Motor neuron (in vitro differentiated cells): ENCODE measurements at regions of chrX and their contacts with region 1.

Region 1: DNA sequence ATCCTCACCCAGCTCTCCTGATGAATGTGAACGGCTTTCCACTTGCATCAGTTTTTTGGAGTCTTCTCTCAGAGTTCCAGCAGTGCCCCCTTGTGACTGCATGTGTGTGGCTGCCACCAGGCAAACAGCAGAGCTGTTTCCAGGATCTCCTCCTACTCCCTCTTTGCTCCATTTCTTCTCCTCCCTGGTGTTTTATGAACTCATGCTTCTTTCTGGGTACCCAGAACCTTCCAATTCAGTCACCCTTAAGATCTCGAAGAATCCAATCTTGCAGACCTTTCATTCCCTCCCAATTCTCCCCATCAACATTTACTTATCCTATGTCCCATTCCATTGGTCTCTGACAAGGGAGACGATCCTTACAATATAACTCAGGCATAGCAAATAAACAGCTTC is 6.8 kb upstream of the TCEANC start:
- ATAC-seq: peak in 6 of 8 experiments; percentile 32 to 91 (median 64)
- H3K4me3 ChIP-seq: no peak overlapping the region
- H3K27ac ChIP-seq: no peak overlapping the region
- H3K4me1 ChIP-seq: peaks cover 13 to 14% of the 10 kb centered on the region in 2 donors

Region 2: GRCh38 chrX:13506574-13506973 is 139.6 kb before region 1 on chrX:
- in situ Hi-C with region 1: loop called in 3 of 9 experiments (anchors 10 to 25 kb)
- ATAC-seq: no peak
- H3K4me3 ChIP-seq: no peak overlapping the region
- H3K27ac ChIP-seq: no peak overlapping the region
- H3K4me1 ChIP-seq: no peaks in the 10 kb centered on the region